Naive thymus-derived CD4-positive, alpha-beta T cell (primary cell): ENCODE measurements at regions of chr11 and their contacts with region 1.

Region 1: GRCh38 chr11:13462901-13463778 is at the start of gene BTBD10:
- DNase-seq: peak; percentile 87 to 94 (median 91)
- ATAC-seq: peak; percentile 100
- H3K4me3 ChIP-seq: peak within 1 kb of the TSS; percentile 98
- H3K4me3 Mint-ChIP-seq: peak within 1 kb of the TSS; percentile 97 to 100 (median 99)
- H3K27ac ChIP-seq: peak within 1 kb of the TSS; percentile 96
- H3K27ac Mint-ChIP-seq: peak within 1 kb of the TSS; percentile 93 to 100 (median 97)
- H3K4me1 ChIP-seq: peaks cover 18 to 20% of the 10 kb centered on the region in 2 donors
- H3K4me1 Mint-ChIP-seq: peaks cover 22 to 54% (median 46%) of the 10 kb centered on the region in 7 donors
- H3K27me3 ChIP-seq: no peaks in the 10 kb centered on the region
- H3K27me3 Mint-ChIP-seq: peaks cover 0 to 5% (median 0%) of the 10 kb centered on the region in 5 donors
- total RNA-seq, gene BTBD10: 16.3 to 25.2 (median 19.4) TPM

Region 2: GRCh38 chr11:12963792-12964536 is 499.2 kb before region 1 on chr11:
- CTCF ChIA-PET with region 1: no interaction called
- POLR2A ChIA-PET with region 1: no interaction called
- intact Hi-C with region 1: loop called (anchors 2 kb)
- DNase-seq: peak; percentile 13 to 59 (median 39)
- ATAC-seq: peak; percentile 76
- H3K4me3 ChIP-seq: no peak overlapping the region
- H3K4me3 Mint-ChIP-seq: peak overlapping the region in 1 of 10 donors; percentile 5
- H3K27ac ChIP-seq: no peak overlapping the region
- H3K27ac Mint-ChIP-seq: no peak overlapping the region
- H3K4me1 ChIP-seq: no peaks in the 10 kb centered on the region
- H3K4me1 Mint-ChIP-seq: no peaks in the 10 kb centered on the region
- H3K27me3 ChIP-seq: no peaks in the 10 kb centered on the region
- H3K27me3 Mint-ChIP-seq: peaks cover 17 to 37% (median 30%) of the 10 kb centered on the region in 5 donors

Region 3: DNA sequence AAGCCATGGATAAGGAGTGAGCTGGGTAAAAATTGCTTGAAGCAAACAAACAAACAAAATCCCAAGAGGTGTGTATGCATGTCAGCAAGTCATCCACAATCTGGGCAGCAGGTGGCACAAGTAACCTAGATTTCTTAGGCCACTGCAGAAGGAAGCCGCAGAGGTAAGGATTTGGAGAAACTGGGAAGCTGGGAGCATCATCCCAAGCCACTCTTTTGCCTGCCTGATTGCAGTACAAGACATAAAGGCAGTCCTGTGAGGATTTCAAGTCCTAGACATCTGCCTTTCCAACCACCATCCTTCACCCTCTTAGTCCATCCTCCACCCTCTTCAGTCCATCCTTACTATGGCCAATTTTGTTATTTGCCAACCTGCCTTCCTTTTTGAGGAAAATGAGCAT is 252.7 kb before region 1 on chr11:
- CTCF ChIA-PET with region 1: no interaction called
- POLR2A ChIA-PET with region 1: no interaction called
- intact Hi-C with region 1: loop called (anchors 1 to 2 kb)
- DNase-seq: peak in 3 of 9 donors; percentile 7 to 9 (median 8)
- ATAC-seq: no peak
- H3K4me3 ChIP-seq: no peak overlapping the region
- H3K4me3 Mint-ChIP-seq: no peak overlapping the region
- H3K27ac ChIP-seq: no peak overlapping the region
- H3K27ac Mint-ChIP-seq: peak overlapping the region in 1 of 9 donors; percentile 32
- H3K4me1 ChIP-seq: peaks cover 0 to 6% of the 10 kb centered on the region in 2 donors
- H3K4me1 Mint-ChIP-seq: peaks cover 16 to 33% (median 23%) of the 10 kb centered on the region in 7 donors
- H3K27me3 ChIP-seq: no peaks in the 10 kb centered on the region
- H3K27me3 Mint-ChIP-seq: peaks cover 0 to 3% (median 0%) of the 10 kb centered on the region in 5 donors

Region 4: GRCh38 chr11:13335319-13335718 is 127.8 kb before region 1 on chr11:
- CTCF ChIA-PET with region 1: no interaction called
- POLR2A ChIA-PET with region 1: no interaction called
- intact Hi-C with region 1: loop called in 1 of 2 experiments (anchors 10 kb)
- DNase-seq: peak; percentile 19 to 75 (median 67)
- ATAC-seq: peak; percentile 84
- H3K4me3 ChIP-seq: no peak overlapping the region
- H3K4me3 Mint-ChIP-seq: no peak overlapping the region
- H3K27ac ChIP-seq: no peak overlapping the region
- H3K27ac Mint-ChIP-seq: peak overlapping the region in 4 of 9 donors; percentile 0 to 19 (median 2)
- H3K4me1 ChIP-seq: peaks cover 21 to 37% of the 10 kb centered on the region in 2 donors
- H3K4me1 Mint-ChIP-seq: peaks cover 40 to 84% (median 81%) of the 10 kb centered on the region in 7 donors
- H3K27me3 ChIP-seq: no peaks in the 10 kb centered on the region
- H3K27me3 Mint-ChIP-seq: no peaks in the 10 kb centered on the region

Region 5: DNA sequence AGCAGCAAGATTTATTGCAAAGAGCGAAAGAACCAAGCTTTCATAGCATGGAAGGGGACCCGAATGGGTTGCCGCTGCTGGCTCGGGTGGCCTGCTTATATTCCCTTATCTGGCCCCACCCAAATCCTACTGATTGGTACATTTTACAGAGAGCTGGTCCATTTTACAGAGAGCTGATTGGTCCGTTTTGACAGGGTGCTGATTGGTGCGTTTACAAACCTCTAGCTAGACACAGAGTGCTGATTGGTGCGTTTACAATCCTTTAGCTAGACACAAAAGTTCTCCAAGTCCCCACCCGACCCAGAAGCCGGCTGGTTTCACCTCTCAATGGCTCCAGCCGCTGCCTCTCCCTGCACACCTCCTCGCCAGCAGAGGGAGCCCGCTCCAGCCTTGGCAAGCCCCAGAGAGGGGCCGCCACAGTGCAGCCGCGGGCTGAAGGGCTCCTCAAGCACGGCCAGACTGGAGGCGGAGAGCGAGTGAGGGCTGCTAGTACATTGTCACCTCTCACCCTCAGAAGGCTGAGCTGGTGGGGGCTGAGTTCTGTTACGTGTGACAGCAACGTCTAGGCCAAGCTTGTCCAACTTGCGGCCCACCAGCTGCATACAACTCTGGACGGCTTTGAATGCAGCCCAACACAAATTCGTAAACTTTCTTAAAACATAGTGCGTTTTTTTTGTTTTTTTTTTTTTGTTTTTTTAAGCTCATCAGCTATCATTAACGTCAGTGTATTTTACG is 24.0 kb after region 1 on chr11:
- CTCF ChIA-PET with region 1: interaction called, 7 read pairs
- POLR2A ChIA-PET with region 1: interaction called, 3 read pairs
- intact Hi-C with region 1: loop called (anchors 1 kb)
- DNase-seq: peak; percentile 28 to 64 (median 55)
- ATAC-seq: peak; percentile 92
- H3K4me3 ChIP-seq: peak overlapping the region; percentile 61
- H3K4me3 Mint-ChIP-seq: peak overlapping the region; percentile 66 to 90 (median 76)
- H3K27ac ChIP-seq: no peak overlapping the region
- H3K27ac Mint-ChIP-seq: peak overlapping the region in 6 of 9 donors; percentile 40 to 77 (median 74)
- H3K4me1 ChIP-seq: peaks cover 0 to 4% of the 10 kb centered on the region in 2 donors
- H3K4me1 Mint-ChIP-seq: peaks cover 5 to 7% (median 6%) of the 10 kb centered on the region in 7 donors
- H3K27me3 ChIP-seq: no peaks in the 10 kb centered on the region
- H3K27me3 Mint-ChIP-seq: peaks cover 2 to 12% (median 4%) of the 10 kb centered on the region in 5 donors

Region 6: GRCh38 chr11:13661074-13661623 is 198.0 kb after region 1 on chr11:
- CTCF ChIA-PET with region 1: no interaction called
- POLR2A ChIA-PET with region 1: no interaction called
- intact Hi-C with region 1: no loop called
- DNase-seq: no peak
- ATAC-seq: no peak
- H3K4me3 ChIP-seq: no peak overlapping the region
- H3K4me3 Mint-ChIP-seq: no peak overlapping the region
- H3K27ac ChIP-seq: no peak overlapping the region
- H3K27ac Mint-ChIP-seq: no peak overlapping the region
- H3K4me1 ChIP-seq: no peaks in the 10 kb centered on the region
- H3K4me1 Mint-ChIP-seq: no peaks in the 10 kb centered on the region
- H3K27me3 ChIP-seq: no peaks in the 10 kb centered on the region
- H3K27me3 Mint-ChIP-seq: peaks cover 6 to 33% (median 22%) of the 10 kb centered on the region in 5 donors

Region 7: GRCh38 chr11:13728076-13728475 is 264.9 kb after region 1 on chr11:
- CTCF ChIA-PET with region 1: no interaction called
- POLR2A ChIA-PET with region 1: no interaction called
- intact Hi-C with region 1: no loop called
- DNase-seq: no peak
- ATAC-seq: no peak
- H3K4me3 ChIP-seq: no peak overlapping the region
- H3K4me3 Mint-ChIP-seq: no peak overlapping the region
- H3K27ac ChIP-seq: no peak overlapping the region
- H3K27ac Mint-ChIP-seq: no peak overlapping the region
- H3K4me1 ChIP-seq: no peaks in the 10 kb centered on the region
- H3K4me1 Mint-ChIP-seq: peaks cover 0 to 2% (median 0%) of the 10 kb centered on the region in 7 donors
- H3K27me3 ChIP-seq: no peaks in the 10 kb centered on the region
- H3K27me3 Mint-ChIP-seq: no peaks in the 10 kb centered on the region

Region 8: GRCh38 chr11:15074206-15075161 is 1611.3 kb after region 1 on chr11:
- CTCF ChIA-PET with region 1: no interaction called
- POLR2A ChIA-PET with region 1: no interaction called
- intact Hi-C with region 1: loop called in 1 of 2 experiments (anchors 10 kb)
- DNase-seq: peak; percentile 66 to 86 (median 75)
- ATAC-seq: peak; percentile 88
- H3K4me3 ChIP-seq: peak overlapping the region; percentile 41
- H3K4me3 Mint-ChIP-seq: peak overlapping the region; percentile 76 to 95 (median 86)
- H3K27ac ChIP-seq: no peak overlapping the region
- H3K27ac Mint-ChIP-seq: peak overlapping the region in 4 of 9 donors; percentile 29 to 86 (median 56)
- H3K4me1 ChIP-seq: peaks cover 6 to 14% of the 10 kb centered on the region in 2 donors
- H3K4me1 Mint-ChIP-seq: peaks cover 12 to 23% (median 17%) of the 10 kb centered on the region in 7 donors
- H3K27me3 ChIP-seq: peaks cover 4% of the 10 kb centered on the region in 2 donors
- H3K27me3 Mint-ChIP-seq: peaks cover 9 to 47% (median 14%) of the 10 kb centered on the region in 5 donors